Ascending aorta (tissue), 2 donors: ENCODE measurements at regions of chr2 and their contacts with region 1.

Region 1: DNA sequence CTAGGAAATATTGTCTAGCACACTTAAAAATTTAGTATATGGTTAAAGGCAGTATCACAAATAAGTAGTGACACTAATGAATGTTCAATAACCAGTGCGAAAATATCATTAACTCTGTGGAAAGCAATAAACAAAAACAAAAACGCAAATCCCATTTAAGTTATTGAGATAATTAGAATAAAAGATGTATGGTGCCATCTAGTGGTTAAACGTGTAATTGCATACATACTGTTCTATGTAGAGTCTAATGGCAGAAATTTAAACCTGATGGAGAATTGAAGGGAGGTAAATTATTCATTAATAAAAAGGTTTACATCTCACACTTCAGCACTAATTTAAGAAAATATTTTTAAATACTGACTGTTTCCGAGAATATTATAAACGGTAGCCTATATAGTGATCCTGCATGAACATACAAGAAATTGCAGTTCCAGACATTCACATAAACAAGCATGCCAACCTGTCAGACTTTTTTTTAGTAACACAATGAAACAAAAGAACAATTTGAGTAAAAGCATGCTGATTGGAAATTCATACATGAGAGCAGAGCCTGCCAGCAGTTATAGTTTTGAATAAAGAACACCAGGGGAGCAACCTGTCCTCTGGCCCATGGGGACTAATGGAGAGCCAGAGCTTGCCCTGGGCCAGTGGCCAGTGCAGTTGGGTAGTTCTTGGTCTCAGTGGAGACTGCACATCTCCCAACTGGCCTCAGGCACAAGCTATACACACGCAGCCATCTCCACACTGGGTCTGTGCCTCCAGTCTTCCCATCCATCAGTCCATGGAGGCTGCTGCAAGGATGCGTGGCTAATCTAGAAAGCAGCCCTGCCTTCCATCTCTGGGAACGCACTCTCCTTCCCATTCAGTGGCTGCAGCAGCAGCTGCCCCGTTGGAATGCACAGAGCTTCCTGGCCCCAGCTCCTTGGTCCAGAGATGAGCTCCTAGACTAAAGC is 28.0 kb downstream of the GCG start:
- DNase-seq: no peak
- H3K4me3 ChIP-seq: no peak overlapping the region
- H3K27ac ChIP-seq: no peak overlapping the region
- H3K4me1 ChIP-seq: no peaks in the 10 kb centered on the region
- H3K27me3 ChIP-seq: no peaks in the 10 kb centered on the region
- CTCF ChIP-seq: peak; percentile 31 to 74 (median 73)

Region 2: GRCh38 chr2:160666154-160667060 is 1457.7 kb before region 1 on chr2:
- intact Hi-C with region 1: no loop called
- DNase-seq: no peak
- H3K4me3 ChIP-seq: peak overlapping the region in 1 of 2 donors; percentile 31
- H3K27ac ChIP-seq: peak overlapping the region; percentile 58 to 78
- H3K4me1 ChIP-seq: peaks cover 0 to 18% of the 10 kb centered on the region in 2 donors
- H3K27me3 ChIP-seq: no peaks in the 10 kb centered on the region
- CTCF ChIP-seq: no peak

Region 3: DNA sequence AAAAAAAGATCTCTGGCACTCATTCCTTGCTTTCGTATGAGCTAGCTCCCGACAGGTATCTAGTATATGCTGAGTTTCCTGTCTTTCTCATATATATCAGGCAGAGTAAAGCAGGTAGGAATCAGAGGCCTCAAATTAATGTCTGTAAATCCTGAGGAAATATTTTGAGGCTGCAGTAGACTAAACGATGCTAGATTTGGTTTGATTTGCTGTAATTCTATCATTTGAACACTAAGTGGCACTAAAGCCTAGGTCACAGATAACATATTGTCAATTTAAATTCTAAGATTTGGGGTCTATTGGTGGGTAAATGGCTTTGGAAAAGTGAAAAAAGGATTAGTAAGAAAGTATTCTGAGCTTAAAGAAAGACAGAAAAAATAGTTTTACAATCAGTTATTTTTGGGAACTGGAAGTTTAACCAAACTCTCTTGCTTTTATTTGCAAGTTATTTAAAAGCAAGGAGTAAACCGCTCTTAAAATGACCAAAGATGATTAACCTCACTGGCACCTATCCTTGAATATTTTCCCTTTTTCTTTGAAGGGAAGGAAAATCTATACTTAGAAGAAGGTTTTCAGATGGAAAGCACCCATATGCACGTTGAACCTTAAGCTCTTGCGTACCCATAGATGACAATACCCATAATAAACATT is 537.4 kb before region 1 on chr2:
- intact Hi-C with region 1: loop called (anchors 5 kb)
- DNase-seq: no peak
- H3K4me3 ChIP-seq: no peak overlapping the region
- H3K27ac ChIP-seq: no peak overlapping the region
- H3K4me1 ChIP-seq: no peaks in the 10 kb centered on the region
- H3K27me3 ChIP-seq: no peaks in the 10 kb centered on the region
- CTCF ChIP-seq: peak in 1 of 3 experiments; percentile 50

Region 4: DNA sequence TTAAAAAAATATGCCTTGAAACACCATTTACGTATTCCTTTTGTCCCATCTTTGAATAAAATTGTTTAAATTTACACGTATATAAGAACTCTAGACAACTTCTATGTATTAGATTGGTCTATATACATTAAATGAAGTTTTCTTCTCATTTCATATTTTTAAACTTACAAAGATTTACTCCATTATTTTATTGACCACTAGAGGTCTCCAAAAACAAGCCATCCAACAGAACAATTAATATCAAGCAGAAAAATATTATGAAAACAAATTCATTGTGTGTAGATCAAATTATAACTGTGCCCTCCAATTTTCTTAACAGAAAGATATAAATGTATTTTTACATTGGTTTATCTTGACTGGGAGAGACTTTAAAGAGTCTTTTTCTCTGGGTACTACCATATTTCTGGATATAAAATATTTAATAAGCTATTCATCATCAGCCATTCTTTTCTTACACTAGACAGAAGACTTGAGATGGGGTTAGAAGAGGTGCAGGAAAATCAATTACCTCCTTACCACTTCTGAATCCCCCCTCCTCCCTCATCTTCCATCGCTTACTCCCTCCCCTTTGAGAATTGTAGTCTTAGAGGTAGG is 116.5 kb before region 1 on chr2:
- intact Hi-C with region 1: loop called (anchors 5 kb)
- DNase-seq: no peak
- H3K4me3 ChIP-seq: no peak overlapping the region
- H3K27ac ChIP-seq: no peak overlapping the region
- H3K4me1 ChIP-seq: no peaks in the 10 kb centered on the region
- H3K27me3 ChIP-seq: no peaks in the 10 kb centered on the region
- CTCF ChIP-seq: peak; percentile 25 to 60 (median 43)

Region 5: GRCh38 chr2:162297925-162298552 is 174.0 kb after region 1 on chr2:
- intact Hi-C with region 1: no loop called
- DNase-seq: peak in 1 of 2 donors; percentile 69
- H3K4me3 ChIP-seq: no peak overlapping the region
- H3K27ac ChIP-seq: no peak overlapping the region
- H3K4me1 ChIP-seq: no peaks in the 10 kb centered on the region
- H3K27me3 ChIP-seq: no peaks in the 10 kb centered on the region
- CTCF ChIP-seq: peak; percentile 72 to 93 (median 88)

Region 6: GRCh38 chr2:163132850-163133249 is 1008.8 kb after region 1 on chr2:
- intact Hi-C with region 1: no loop called
- DNase-seq: no peak
- H3K4me3 ChIP-seq: no peak overlapping the region
- H3K27ac ChIP-seq: no peak overlapping the region
- H3K4me1 ChIP-seq: no peaks in the 10 kb centered on the region
- H3K27me3 ChIP-seq: no peaks in the 10 kb centered on the region
- CTCF ChIP-seq: peak in 1 of 3 experiments; percentile 21